Gastrocnemius medialis (tissue), 4 donors: ENCODE measurements at regions of chr17 and their contacts with region 1.

Region 1: DNA sequence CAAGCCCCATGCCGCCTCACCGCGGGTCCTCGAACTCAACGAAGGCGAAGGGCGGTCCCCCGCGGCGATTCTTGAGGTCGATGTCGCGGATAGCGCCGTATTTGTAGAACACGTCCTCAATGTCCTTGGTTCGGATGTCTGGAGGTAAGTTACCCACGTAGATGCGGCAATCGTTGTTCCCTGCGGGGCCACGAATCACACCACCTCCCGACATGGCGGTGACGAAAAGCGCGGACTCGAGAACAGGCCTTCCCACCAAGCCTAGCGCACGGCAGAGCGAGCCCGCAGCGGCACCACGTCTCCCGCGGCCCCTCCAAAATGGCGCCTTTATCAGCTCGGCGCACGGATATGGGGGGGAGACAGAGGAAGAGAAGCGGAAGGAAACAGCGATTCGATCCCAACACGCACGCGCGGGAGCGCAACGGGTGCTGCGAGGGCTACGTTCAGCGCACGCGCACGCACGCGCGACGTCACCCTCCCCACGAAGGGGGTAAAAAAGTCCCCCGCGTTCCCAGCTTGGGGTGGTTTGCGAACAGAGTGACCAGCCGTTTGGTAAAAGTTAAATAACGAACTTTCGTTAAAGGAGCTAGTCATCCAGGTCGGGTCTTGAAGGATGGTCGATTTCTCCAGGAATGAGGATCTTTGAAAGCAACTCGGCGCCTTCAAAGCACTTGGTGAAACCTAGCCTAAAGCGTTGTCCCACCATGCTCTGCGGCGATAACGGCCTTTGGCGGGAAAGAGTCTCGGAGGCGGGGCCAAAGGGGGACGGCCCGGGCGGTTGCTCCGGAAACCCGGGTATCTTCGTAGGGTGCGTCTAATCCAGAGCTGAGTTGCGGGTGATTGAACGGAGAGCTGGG is at the start of gene SRSF1:
- DNase-seq: peak; percentile 95 to 96
- ATAC-seq: peak; percentile 90 to 93
- H3K4me3 ChIP-seq: peak within 1 kb of the TSS; percentile 91 to 98 (median 97)
- H3K27ac ChIP-seq: peak within 1 kb of the TSS; percentile 96 to 100 (median 100)
- H3K4me1 ChIP-seq: peaks cover 47 to 48% of the 10 kb centered on the region in 2 donors
- H3K27me3 ChIP-seq: no peaks in the 10 kb centered on the region
- CTCF ChIP-seq: peak in 1 of 5 experiments; percentile 25
- POLR2A ChIP-seq: peak; percentile 97 to 98
- total RNA-seq, gene SRSF1: 69.4 to 85.4 (median 82.2) TPM

Region 2: DNA sequence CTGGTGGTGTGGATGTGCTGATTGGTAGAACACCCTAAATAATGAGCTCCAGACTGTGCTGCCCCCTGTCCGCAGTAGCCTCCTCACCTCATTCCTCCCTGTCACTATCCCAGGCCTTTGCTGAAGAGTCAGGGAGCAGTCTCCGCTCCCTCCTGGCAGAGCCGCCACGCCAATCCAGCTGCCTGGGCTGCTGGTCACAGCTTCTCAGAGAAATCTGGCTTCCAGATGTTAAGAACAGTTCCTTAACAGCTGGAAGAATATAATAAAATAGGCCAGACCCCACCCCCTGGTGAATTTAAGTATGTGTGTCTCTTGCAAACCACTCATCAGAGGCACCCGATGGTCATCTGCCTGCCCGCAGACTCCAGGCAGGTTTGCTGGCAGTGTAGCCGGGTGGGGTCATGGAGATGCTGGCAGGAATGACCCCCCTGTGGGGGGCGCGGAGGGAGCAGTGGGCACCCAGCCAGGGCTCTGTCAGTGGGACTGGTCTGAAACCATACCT is 423.1 kb before region 1 on chr17:
- in situ Hi-C with region 1: no loop called
- intact Hi-C with region 1: no loop called
- DNase-seq: no peak
- ATAC-seq: no peak
- H3K4me3 ChIP-seq: no peak overlapping the region
- H3K27ac ChIP-seq: no peak overlapping the region
- H3K4me1 ChIP-seq: peaks cover 18 to 47% of the 10 kb centered on the region in 2 donors
- H3K27me3 ChIP-seq: no peaks in the 10 kb centered on the region
- CTCF ChIP-seq: no peak
- POLR2A ChIP-seq: no peak

Region 3: DNA sequence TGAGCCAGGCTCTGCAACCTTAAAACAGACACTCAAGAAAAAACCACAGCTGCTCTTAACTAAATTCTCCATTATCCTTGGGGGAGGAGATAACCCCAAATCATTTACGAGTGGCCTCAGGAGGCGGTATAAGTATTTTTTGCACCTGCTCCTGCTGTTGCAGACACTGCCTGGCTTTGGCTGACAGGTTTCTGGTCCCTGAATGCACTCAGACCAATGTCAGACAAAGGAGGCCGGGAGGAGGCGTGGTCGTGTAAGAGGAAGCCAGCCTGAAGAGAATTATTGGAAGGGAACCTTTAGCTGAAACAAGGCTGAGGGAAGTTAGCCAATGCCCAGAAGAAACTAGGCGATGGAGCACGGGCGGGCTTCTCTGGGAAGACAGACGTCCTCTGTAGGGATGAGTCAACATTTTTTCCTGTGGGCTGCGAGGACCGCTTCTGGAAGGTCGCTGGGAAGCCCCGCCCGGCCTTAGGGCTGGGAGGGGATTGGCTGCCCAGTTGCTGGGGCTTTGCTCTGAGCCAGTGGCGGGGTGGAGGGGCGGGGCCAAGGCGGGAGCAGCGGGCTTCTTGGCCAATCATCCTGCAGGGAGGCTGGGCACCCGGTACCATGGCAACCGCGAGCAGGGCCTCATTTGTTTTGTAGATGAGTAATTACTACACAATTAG is 344.4 kb before region 1 on chr17:
- in situ Hi-C with region 1: no loop called
- intact Hi-C with region 1: loop called (anchors 10 kb)
- DNase-seq: peak; percentile 86 to 95
- ATAC-seq: peak; percentile 90 to 94
- H3K4me3 ChIP-seq: peak overlapping the region; percentile 15 to 57 (median 37)
- H3K27ac ChIP-seq: peak overlapping the region; percentile 77 to 91 (median 86)
- H3K4me1 ChIP-seq: peaks cover 30 to 35% of the 10 kb centered on the region in 2 donors
- H3K27me3 ChIP-seq: no peaks in the 10 kb centered on the region
- CTCF ChIP-seq: peak in 1 of 5 experiments; percentile 19
- POLR2A ChIP-seq: peak in 1 of 2 donors; percentile 52

Region 4: DNA sequence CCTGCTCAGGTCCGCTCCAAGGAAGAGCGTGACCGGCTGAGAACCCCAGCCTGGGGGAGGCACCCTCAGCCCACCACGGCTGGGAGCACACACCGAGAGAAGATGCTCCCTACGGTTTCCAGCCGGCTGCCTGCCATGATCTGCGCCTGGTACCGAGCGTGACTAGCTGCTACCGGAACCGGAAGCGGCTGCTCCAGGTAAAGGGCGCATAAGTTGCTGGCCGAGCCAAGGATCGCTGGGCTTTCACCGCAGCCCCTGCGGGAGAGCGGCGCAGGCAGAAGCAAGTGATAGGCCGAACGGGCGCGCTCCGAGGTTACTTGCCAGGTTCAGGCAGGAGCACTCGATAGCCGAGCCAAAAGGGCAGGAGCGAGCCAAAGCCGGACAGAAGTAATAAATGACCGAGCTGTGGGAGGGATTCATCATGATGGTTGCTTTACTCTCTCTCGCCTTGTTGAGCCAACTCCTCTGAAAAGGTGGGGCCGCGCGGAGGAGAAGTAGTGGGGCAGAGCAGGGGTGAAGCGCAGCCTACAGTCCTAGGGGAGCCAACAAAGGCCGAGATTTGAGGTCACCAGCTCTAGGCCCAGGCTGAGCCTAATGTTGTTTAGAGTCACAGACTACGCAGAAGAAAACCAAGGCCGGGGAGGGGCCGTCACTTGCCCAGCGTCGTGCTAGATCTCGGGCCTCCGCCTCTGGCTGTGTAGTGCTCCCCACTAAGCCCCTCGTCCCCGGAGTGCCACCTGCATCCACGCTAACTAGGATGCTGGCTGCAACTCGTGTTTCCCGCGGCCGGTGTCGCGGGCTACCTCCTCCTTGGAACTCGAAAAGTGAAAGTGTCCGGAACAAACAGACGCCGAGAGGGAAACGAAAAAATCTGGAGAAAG is 157.0 kb before region 1 on chr17 and contains the start of gene MRPS23:
- in situ Hi-C with region 1: no loop called
- intact Hi-C with region 1: loop called (anchors 2 kb)
- DNase-seq: peak; percentile 98 to 99
- ATAC-seq: peak; percentile 63 to 72
- H3K4me3 ChIP-seq: peak within 1 kb of the TSS; percentile 82 to 98 (median 88)
- H3K27ac ChIP-seq: peak within 1 kb of the TSS; percentile 91 to 98 (median 96)
- H3K4me1 ChIP-seq: peaks cover 52% of the 10 kb centered on the region in 2 donors
- H3K27me3 ChIP-seq: no peaks in the 10 kb centered on the region
- CTCF ChIP-seq: peak in 1 of 5 experiments; percentile 9
- POLR2A ChIP-seq: peak; percentile 83 to 87
- total RNA-seq, gene MRPS23: 24.3 to 47.2 (median 35.5) TPM

Region 5: DNA sequence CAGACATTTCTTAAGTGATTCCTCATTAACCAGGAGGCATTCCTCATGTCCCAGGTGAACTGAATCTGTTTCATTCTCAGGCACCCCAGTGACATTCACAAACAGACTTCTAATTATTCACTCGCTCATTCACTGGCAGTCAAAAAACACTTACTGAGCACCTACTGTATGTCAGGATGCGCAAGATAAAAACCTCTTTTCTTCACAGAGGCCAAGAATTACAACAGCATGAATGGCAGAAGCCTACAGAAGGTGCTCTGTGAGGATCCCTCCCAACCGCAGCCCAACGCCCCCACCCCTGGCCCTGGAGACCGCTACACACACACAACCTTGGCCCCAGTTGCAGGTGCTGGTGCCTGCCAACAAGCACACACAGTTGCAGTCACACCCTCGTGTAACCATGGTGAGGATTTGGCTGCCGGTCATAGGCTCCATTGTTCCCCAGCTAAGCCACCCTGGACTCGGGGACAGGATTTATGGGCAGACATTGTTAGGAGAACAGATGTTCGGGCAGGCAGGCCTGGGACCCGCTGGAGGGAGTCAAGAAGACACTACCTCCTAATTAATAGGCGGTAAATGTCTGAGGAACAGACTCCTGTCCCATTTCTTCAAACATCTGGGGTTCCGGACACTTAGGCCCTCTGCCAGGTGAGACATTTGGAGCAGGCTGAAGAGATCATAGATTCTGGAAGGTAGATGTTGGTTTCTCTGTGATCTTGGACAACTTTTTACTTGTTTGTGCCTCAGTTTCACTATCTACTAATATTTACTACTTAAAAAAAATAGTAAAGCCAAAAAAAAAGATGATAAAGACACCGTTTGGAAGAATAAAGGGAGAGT is 95.1 kb before region 1 on chr17:
- in situ Hi-C with region 1: no loop called
- intact Hi-C with region 1: no loop called
- DNase-seq: peak; percentile 56 to 81
- ATAC-seq: peak; percentile 74 to 84
- H3K4me3 ChIP-seq: no peak overlapping the region
- H3K27ac ChIP-seq: peak overlapping the region; percentile 35 to 62 (median 57)
- H3K4me1 ChIP-seq: peaks cover 56 to 58% of the 10 kb centered on the region in 2 donors
- H3K27me3 ChIP-seq: no peaks in the 10 kb centered on the region
- CTCF ChIP-seq: no peak
- POLR2A ChIP-seq: no peak

Region 6: DNA sequence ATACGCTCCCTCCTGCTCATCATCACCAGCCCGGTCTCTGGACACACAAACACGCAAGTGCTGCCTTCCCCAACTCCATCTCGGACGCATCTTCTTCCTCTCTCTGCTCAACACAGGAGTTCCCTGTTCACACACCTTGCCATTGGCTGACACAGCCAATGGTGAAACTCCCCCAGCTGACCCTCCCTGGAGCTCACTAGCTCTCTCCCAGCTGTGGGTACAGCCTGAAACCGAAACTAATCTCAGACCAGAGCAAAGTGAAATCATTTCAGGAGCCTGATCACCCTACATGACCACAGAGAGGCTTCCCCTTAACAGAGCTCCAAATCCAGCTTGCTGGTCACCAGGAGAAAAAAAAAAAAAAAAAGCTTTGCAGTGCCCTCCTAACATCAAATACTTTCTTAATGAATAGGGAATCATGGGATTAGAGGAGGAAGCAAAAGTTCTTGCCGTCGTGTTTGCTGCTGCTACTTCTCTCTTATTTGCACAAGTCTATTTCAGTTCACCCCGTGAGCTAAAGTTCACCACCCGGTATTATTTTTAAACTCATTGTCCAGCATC is 60.3 kb before region 1 on chr17:
- in situ Hi-C with region 1: no loop called
- intact Hi-C with region 1: no loop called
- DNase-seq: peak in 1 of 2 donors; percentile 70
- ATAC-seq: peak; percentile 20 to 55
- H3K4me3 ChIP-seq: peak overlapping the region; percentile 46 to 58 (median 46)
- H3K27ac ChIP-seq: peak overlapping the region; percentile 82 to 99 (median 98)
- H3K4me1 ChIP-seq: peaks cover 89 to 94% of the 10 kb centered on the region in 2 donors
- H3K27me3 ChIP-seq: no peaks in the 10 kb centered on the region
- CTCF ChIP-seq: no peak
- POLR2A ChIP-seq: peak in 1 of 2 donors; percentile 23

Region 7: DNA sequence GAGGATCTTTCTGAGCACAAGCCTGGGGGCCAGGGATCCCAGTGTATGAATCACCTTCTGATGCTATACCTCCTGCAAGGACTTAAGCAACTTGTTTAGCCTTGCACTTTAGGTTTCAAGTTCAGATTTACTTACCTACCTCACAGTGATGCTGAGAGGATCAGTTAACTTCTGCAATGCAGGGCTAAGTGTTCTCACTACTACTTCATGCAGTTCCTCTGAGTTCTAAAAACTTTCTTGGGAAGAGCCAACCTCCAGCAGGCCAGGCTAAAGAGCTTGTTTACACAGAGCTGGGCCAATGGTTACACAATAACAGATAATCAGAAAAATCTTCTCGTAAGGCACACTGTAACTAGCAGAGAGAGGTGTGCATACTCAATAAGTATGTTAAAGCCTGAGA is 32.1 kb before region 1 on chr17:
- in situ Hi-C with region 1: no loop called
- intact Hi-C with region 1: no loop called
- DNase-seq: no peak
- ATAC-seq: peak; percentile 54 to 82
- H3K4me3 ChIP-seq: no peak overlapping the region
- H3K27ac ChIP-seq: peak overlapping the region; percentile 65 to 99 (median 82)
- H3K4me1 ChIP-seq: peaks cover 26 to 53% of the 10 kb centered on the region in 2 donors
- H3K27me3 ChIP-seq: no peaks in the 10 kb centered on the region
- CTCF ChIP-seq: no peak
- POLR2A ChIP-seq: peak; percentile 28 to 57